ENCODE measurements at regions of chr4 and their contacts with region 1.

Region 1: GRCh38 chr4:40056716-40057585 is at the start of gene N4BP2:
- DNase-seq: peak; percentile 41 to 86 (median 64)
- ATAC-seq: peak; percentile 69 to 79 (median 76)
- H3K4me3 ChIP-seq: peak within 1 kb of the TSS; percentile 75 to 97
- H3K4me3 Mint-ChIP-seq: peak within 1 kb of the TSS; percentile 94 to 98 (median 95)
- H3K27ac ChIP-seq: peak within 1 kb of the TSS; percentile 87
- H3K27ac Mint-ChIP-seq: peak within 1 kb of the TSS; percentile 96
- H3K4me1 ChIP-seq: peaks cover 17 to 21% of the 10 kb centered on the region in 2 experiments
- H3K4me1 Mint-ChIP-seq: peaks cover 31 to 44% (median 37%) of the 10 kb centered on the region in 3 donors
- H3K27me3 ChIP-seq: no peaks in the 10 kb centered on the region
- H3K27me3 Mint-ChIP-seq: no peaks in the 10 kb centered on the region
- total RNA-seq, gene N4BP2: 12.6 to 38.3 (median 15.3) TPM

Region 2: GRCh38 chr4:39970671-39971640 is 86.0 kb before region 1 on chr4:
- CTCF ChIA-PET with region 1: no interaction called
- POLR2A ChIA-PET with region 1: no interaction called
- DNase-seq: no peak
- ATAC-seq: no peak
- H3K4me3 ChIP-seq: no peak overlapping the region
- H3K4me3 Mint-ChIP-seq: peak overlapping the region in 2 of 3 donors; percentile 9 to 63
- H3K27ac ChIP-seq: no peak overlapping the region
- H3K27ac Mint-ChIP-seq: no peak overlapping the region
- H3K4me1 ChIP-seq: peaks cover 18 to 41% of the 10 kb centered on the region in 2 experiments
- H3K4me1 Mint-ChIP-seq: peaks cover 56 to 70% (median 65%) of the 10 kb centered on the region in 3 donors
- H3K27me3 ChIP-seq: no peaks in the 10 kb centered on the region
- H3K27me3 Mint-ChIP-seq: no peaks in the 10 kb centered on the region

Region 3: GRCh38 chr4:40033613-40034012 is 23.3 kb before region 1 on chr4:
- CTCF ChIA-PET with region 1: no interaction called
- POLR2A ChIA-PET with region 1: no interaction called
- DNase-seq: no peak
- ATAC-seq: no peak
- H3K4me3 ChIP-seq: no peak overlapping the region
- H3K4me3 Mint-ChIP-seq: no peak overlapping the region
- H3K27ac ChIP-seq: no peak overlapping the region
- H3K27ac Mint-ChIP-seq: no peak overlapping the region
- H3K4me1 ChIP-seq: no peaks in the 10 kb centered on the region
- H3K4me1 Mint-ChIP-seq: no peaks in the 10 kb centered on the region
- H3K27me3 ChIP-seq: no peaks in the 10 kb centered on the region
- H3K27me3 Mint-ChIP-seq: no peaks in the 10 kb centered on the region

Region 4: GRCh38 chr4:40193016-40193571 is 136.1 kb after region 1 on chr4:
- CTCF ChIA-PET with region 1: interaction called, 3 to 4 read pairs
- POLR2A ChIA-PET with region 1: interaction called, 5 to 10 read pairs
- DNase-seq: peak in 28 of 35 experiments; percentile 13 to 73 (median 45)
- ATAC-seq: peak; percentile 11 to 48 (median 46)
- H3K4me3 ChIP-seq: peak overlapping the region; percentile 33 to 43
- H3K4me3 Mint-ChIP-seq: peak overlapping the region; percentile 75 to 98 (median 96)
- H3K27ac ChIP-seq: peak overlapping the region; percentile 99
- H3K27ac Mint-ChIP-seq: peak overlapping the region; percentile 95 to 96
- H3K4me1 ChIP-seq: peaks cover 44 to 60% of the 10 kb centered on the region in 2 experiments
- H3K4me1 Mint-ChIP-seq: peaks cover 73 to 82% (median 75%) of the 10 kb centered on the region in 3 donors
- H3K27me3 ChIP-seq: no peaks in the 10 kb centered on the region
- H3K27me3 Mint-ChIP-seq: no peaks in the 10 kb centered on the region

Measured in T-cell (primary cell).